Calu3 (cell line): ENCODE measurements at regions of chr3 and their contacts with region 1.

Region 1: GRCh38 chr3:155854141-155854940 is at the start of gene SLC33A1:
- DNase-seq: peak; percentile 100
- H3K4me3 Mint-ChIP-seq: peak within 1 kb of the TSS; percentile 99
- H3K27ac Mint-ChIP-seq: peak within 1 kb of the TSS; percentile 99
- H3K4me1 Mint-ChIP-seq: peaks cover 16% of the 10 kb centered on the region
- H3K27me3 Mint-ChIP-seq: no peaks in the 10 kb centered on the region
- CTCF ChIP-seq: no peak
- total RNA-seq, gene SLC33A1: 61.6 and 72.0 TPM in 2 replicates

Region 2: GRCh38 chr3:155382396-155383042 is 471.8 kb before region 1 on chr3:
- CTCF ChIA-PET with region 1: no interaction called
- intact Hi-C with region 1: loop called (anchors 10 kb)
- DNase-seq: peak; percentile 89
- H3K4me3 Mint-ChIP-seq: no peak overlapping the region
- H3K27ac Mint-ChIP-seq: no peak overlapping the region
- H3K4me1 Mint-ChIP-seq: no peaks in the 10 kb centered on the region
- H3K27me3 Mint-ChIP-seq: no peaks in the 10 kb centered on the region
- CTCF ChIP-seq: peak; percentile 93

Region 3: DNA sequence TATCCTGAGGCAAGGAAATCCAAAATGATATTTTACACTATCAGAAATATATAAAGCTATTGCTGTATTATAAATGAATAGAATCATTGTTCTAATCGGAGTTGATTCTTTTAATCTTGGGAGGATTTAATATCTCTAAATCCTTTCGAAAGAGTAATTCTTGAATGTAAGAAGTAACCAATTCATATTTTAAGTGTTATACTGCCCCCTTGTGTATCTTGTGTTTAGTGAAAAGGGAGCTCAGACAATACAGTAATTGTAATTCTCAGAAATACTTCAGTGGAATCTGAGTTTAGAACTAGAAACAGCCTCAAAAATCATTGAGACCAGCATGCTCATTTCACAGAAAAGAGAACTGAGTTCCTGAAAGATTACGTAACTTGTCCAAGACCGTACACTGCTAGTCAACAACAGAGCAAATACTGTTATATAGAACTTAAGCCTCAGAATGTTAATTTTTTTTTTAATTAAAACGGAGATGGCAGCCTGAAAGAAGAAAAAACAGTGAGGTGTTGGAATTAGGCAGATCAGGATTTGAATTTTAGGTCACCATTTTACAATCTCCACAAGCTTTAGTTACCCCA is 152.4 kb before region 1 on chr3:
- CTCF ChIA-PET with region 1: no interaction called
- intact Hi-C with region 1: no loop called
- DNase-seq: no peak
- H3K4me3 Mint-ChIP-seq: no peak overlapping the region
- H3K27ac Mint-ChIP-seq: no peak overlapping the region
- H3K4me1 Mint-ChIP-seq: peaks cover 27% of the 10 kb centered on the region
- H3K27me3 Mint-ChIP-seq: no peaks in the 10 kb centered on the region
- CTCF ChIP-seq: peak; percentile 54

Region 4: DNA sequence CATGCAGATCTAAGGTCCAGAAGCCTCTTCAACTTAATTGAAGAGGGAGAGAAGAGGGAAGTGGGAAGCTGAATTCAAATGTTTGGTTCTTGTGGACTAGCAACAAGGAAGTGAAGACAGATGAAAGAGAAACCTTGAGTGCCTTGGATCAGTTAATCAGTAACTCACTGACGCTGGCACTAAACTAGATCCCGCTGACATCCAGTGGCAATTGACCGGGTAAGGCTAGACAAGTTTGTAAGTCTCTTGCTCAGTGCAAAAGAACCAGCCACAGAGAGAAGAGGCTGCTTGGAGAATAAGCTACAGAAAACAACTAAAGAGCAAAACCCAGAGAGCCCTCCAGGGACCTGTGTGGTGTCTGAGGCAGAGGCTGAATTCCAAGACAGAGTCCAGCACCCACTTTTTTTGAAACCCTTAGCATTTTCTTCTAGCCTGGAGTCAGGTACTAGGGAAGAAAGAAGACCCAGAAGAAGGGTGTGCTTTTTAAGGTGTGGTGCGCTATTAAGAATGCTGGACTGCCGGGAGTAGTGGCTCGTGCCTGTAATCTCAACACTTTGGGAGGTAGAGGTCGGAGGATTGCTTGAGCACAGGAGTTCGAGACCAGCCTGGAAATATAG is 116.4 kb before region 1 on chr3:
- CTCF ChIA-PET with region 1: interaction called, 3 read pairs
- intact Hi-C with region 1: loop called (anchors 2 kb)
- DNase-seq: peak; percentile 88
- H3K4me3 Mint-ChIP-seq: peak overlapping the region; percentile 88
- H3K27ac Mint-ChIP-seq: peak overlapping the region; percentile 98
- H3K4me1 Mint-ChIP-seq: peaks cover 39% of the 10 kb centered on the region
- H3K27me3 Mint-ChIP-seq: no peaks in the 10 kb centered on the region
- CTCF ChIP-seq: no peak

Region 5: GRCh38 chr3:155870133-155870944 is 16.0 kb after region 1 on chr3 and contains the start of gene GMPS:
- CTCF ChIA-PET with region 1: interaction called, 10 read pairs
- intact Hi-C with region 1: loop called (anchors 1 kb)
- DNase-seq: peak; percentile 100
- H3K4me3 Mint-ChIP-seq: peak within 1 kb of the TSS; percentile 97
- H3K27ac Mint-ChIP-seq: peak within 1 kb of the TSS; percentile 86
- H3K4me1 Mint-ChIP-seq: peaks cover 37% of the 10 kb centered on the region
- H3K27me3 Mint-ChIP-seq: no peaks in the 10 kb centered on the region
- CTCF ChIP-seq: peak; percentile 21
- total RNA-seq, gene GMPS: 171 and 194 TPM in 2 replicates

Region 6: GRCh38 chr3:155890671-155891190 is 36.4 kb after region 1 on chr3:
- CTCF ChIA-PET with region 1: interaction called, 4 read pairs
- intact Hi-C with region 1: loop called (anchors 2 kb)
- DNase-seq: no peak
- H3K4me3 Mint-ChIP-seq: no peak overlapping the region
- H3K27ac Mint-ChIP-seq: no peak overlapping the region
- H3K4me1 Mint-ChIP-seq: peaks cover 42% of the 10 kb centered on the region
- H3K27me3 Mint-ChIP-seq: no peaks in the 10 kb centered on the region
- CTCF ChIP-seq: no peak